Caco-2 (cell line): ENCODE measurements at regions of chr7 and their contacts with region 1.

Region 1: DNA sequence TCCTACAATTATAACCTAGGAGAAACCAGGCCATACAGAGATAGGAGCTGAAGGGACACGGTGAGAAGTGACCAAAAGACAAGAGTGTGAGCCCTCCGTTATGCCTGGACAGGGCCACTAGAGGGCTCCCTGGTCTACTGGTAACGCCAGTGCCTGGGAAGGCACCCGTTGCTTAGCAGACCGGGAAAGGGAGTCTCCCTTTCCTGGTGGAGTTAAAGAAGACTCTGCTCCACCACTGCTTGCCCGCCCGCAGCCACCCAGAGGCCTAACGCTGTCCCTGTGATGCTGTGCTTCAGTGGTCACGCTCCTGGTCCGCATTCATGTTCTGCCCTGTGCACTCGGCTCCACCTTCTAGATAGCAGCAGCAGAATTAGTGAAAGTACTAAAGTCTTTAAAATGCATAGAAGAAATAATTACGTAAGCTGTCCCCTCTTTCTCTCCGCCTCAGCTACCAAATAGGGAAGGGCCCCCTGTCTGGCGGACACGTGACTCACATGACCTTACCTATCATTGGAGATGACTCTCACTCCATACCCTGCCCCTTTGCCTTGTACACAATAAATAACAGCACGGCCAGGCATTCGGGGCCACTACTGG is 34.8 kb downstream of the GRID2IP start:
- DNase-seq: peak; percentile 88 to 89
- H3K4me3 ChIP-seq: no peak overlapping the region
- H3K4me3 Mint-ChIP-seq: peak overlapping the region; percentile 34
- H3K27ac Mint-ChIP-seq: no peak overlapping the region
- H3K4me1 ChIP-seq: no peaks in the 10 kb centered on the region
- H3K4me1 Mint-ChIP-seq: peaks cover 10% of the 10 kb centered on the region
- H3K27me3 ChIP-seq: no peaks in the 10 kb centered on the region
- H3K27me3 Mint-ChIP-seq: peaks cover 4% of the 10 kb centered on the region
- CTCF ChIP-seq: peak; percentile 89 to 90

Region 2: GRCh38 chr7:6330657-6331056 is 185.8 kb before region 1 on chr7:
- CTCF ChIA-PET with region 1: no interaction called
- POLR2A ChIA-PET with region 1: no interaction called
- intact Hi-C with region 1: no loop called
- DNase-seq: no peak
- H3K4me3 ChIP-seq: no peak overlapping the region
- H3K4me3 Mint-ChIP-seq: no peak overlapping the region
- H3K27ac Mint-ChIP-seq: no peak overlapping the region
- H3K4me1 ChIP-seq: no peaks in the 10 kb centered on the region
- H3K4me1 Mint-ChIP-seq: no peaks in the 10 kb centered on the region
- H3K27me3 ChIP-seq: no peaks in the 10 kb centered on the region
- H3K27me3 Mint-ChIP-seq: no peaks in the 10 kb centered on the region
- CTCF ChIP-seq: no peak

Region 3: DNA sequence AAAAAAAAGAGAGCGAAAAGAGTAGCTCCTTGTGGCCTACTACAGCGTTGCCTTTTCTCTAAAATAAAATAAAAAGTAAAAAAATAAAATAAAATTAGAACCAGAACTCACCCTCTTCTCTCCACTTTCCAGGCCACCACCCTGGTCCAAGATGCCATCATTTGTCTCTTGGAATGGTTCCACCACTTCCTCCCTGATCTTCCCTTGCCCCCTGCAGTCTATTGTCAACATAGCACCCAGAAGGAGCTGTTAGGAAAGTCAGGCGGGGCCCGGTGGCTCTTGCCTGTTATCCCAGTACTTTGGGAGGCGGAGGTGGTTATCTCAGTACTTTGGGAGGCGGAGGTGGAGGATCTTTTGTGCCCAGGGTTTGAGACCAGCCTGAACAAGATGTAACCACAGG is 42.4 kb after region 1 on chr7:
- CTCF ChIA-PET with region 1: interaction called, 16 read pairs
- POLR2A ChIA-PET with region 1: no interaction called
- intact Hi-C with region 1: loop called (anchors 1 kb)
- DNase-seq: peak; percentile 73 to 75
- H3K4me3 ChIP-seq: no peak overlapping the region
- H3K4me3 Mint-ChIP-seq: no peak overlapping the region
- H3K27ac Mint-ChIP-seq: no peak overlapping the region
- H3K4me1 ChIP-seq: no peaks in the 10 kb centered on the region
- H3K4me1 Mint-ChIP-seq: no peaks in the 10 kb centered on the region
- H3K27me3 ChIP-seq: no peaks in the 10 kb centered on the region
- H3K27me3 Mint-ChIP-seq: no peaks in the 10 kb centered on the region
- CTCF ChIP-seq: peak; percentile 62 to 72

Region 4: DNA sequence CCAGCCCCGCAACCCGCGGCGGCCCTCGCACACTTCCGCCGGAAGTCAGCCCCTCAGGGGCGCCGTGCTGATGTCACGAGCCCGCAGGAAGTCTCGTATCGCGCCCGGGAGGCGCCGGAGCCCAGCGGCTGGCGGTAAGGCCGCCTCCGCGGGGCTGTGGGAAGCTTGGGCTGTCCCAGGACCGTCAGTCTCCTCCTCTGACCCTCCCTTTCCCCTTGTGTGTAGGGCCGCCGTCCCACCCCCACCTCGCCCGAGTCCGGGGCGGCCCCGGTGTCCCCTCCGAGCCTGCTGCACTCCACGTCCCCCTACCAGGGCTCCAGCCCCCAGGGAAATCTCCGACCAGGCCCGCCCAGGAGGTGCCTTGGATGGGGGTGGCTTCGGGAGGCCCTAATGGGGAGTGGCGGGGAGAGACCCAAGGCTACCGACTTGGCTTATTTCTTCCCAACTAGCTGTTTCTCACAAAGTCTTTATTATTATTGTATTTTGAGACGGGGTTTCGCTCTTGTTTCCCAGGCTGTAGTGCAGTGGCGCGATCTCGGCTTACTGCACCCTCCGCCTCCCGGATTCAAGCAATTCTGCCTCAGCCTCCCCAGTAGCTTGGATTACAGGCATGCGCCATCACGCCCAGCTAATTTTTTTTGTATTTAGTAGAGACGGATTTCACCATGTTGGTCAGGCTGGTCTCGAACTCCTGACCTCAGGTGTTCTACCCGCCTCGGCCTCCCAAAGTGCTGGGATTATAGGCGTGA is 61.1 kb after region 1 on chr7 and contains the start of gene ZDHHC4:
- CTCF ChIA-PET with region 1: no interaction called
- POLR2A ChIA-PET with region 1: no interaction called
- intact Hi-C with region 1: loop called (anchors 5 kb)
- DNase-seq: peak; percentile 89 to 91
- H3K4me3 ChIP-seq: peak within 1 kb of the TSS; percentile 58
- H3K4me3 Mint-ChIP-seq: peak within 1 kb of the TSS; percentile 92
- H3K27ac Mint-ChIP-seq: peak within 1 kb of the TSS; percentile 96
- H3K4me1 ChIP-seq: peaks cover 12% of the 10 kb centered on the region
- H3K4me1 Mint-ChIP-seq: peaks cover 14% of the 10 kb centered on the region
- H3K27me3 ChIP-seq: no peaks in the 10 kb centered on the region
- H3K27me3 Mint-ChIP-seq: no peaks in the 10 kb centered on the region
- CTCF ChIP-seq: no peak
- total RNA-seq, gene ZDHHC4: 69.9 and 78.9 TPM in 2 replicates

Region 5: GRCh38 chr7:6589829-6590644 is 73.6 kb after region 1 on chr7 and contains the start of gene INTS15:
- CTCF ChIA-PET with region 1: interaction called, 10 read pairs
- POLR2A ChIA-PET with region 1: no interaction called
- intact Hi-C with region 1: no loop called
- DNase-seq: peak; percentile 60 to 90
- H3K4me3 ChIP-seq: peak within 1 kb of the TSS; percentile 99
- H3K4me3 Mint-ChIP-seq: peak within 1 kb of the TSS; percentile 77
- H3K27ac Mint-ChIP-seq: peak within 1 kb of the TSS; percentile 40
- H3K4me1 ChIP-seq: peaks cover 4% of the 10 kb centered on the region; the same call in 1 of the 2 replicates
- H3K4me1 Mint-ChIP-seq: no peaks in the 10 kb centered on the region
- H3K27me3 ChIP-seq: no peaks in the 10 kb centered on the region
- H3K27me3 Mint-ChIP-seq: no peaks in the 10 kb centered on the region
- CTCF ChIP-seq: peak; percentile 2 to 80
- total RNA-seq, gene INTS15: 24.7 and 29.6 TPM in 2 replicates